HAP-1 (cell line): ENCODE measurements at regions of chr12 and their contacts with region 1.

Region 1: GRCh38 chr12:54958048-54958658 is 26.4 kb downstream of the TESPA1 start:
- DNase-seq: peak; percentile 59 to 66
- H3K4me3 ChIP-seq: no peak overlapping the region
- H3K4me1 ChIP-seq: no peaks in the 10 kb centered on the region
- H3K27me3 ChIP-seq: no peaks in the 10 kb centered on the region

Region 2: DNA sequence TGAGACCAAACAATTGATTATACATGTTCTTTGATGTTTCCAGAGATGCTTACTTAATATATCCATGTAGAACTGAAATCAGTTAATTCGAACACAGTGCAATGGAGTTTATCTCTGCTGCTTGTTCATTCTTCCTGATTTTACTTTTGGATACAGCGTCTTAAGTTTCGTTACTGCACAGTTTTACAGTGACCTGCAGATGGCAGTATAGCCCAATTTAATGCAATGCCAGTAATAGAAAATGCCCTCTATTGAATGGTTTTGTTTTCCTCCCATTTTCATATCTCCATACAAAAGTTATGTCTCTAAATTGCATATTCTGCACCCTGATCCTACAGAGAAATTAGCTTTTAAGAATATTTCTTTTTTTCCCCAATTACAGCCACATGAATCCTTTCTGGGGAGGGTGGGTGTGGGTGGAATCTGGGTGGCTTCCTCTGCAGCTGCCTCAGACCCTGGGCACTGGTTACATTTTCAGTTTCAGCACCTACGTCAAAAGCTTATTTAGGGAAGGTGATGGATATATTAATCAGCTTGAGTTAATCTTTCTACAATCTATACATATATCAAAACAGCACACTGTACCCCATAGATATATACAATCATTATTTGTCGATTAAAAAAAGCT is 208.8 kb before region 1 on chr12:
- in situ Hi-C with region 1: loop called (anchors 25 kb)
- DNase-seq: peak; percentile 20 to 40
- H3K4me3 ChIP-seq: no peak overlapping the region
- H3K4me1 ChIP-seq: no peaks in the 10 kb centered on the region
- H3K27me3 ChIP-seq: no peaks in the 10 kb centered on the region

Region 3: GRCh38 chr12:54840317-54840771 is 117.8 kb before region 1 on chr12:
- in situ Hi-C with region 1: loop called (anchors 10 kb)
- DNase-seq: no peak
- H3K4me3 ChIP-seq: no peak overlapping the region
- H3K4me1 ChIP-seq: no peaks in the 10 kb centered on the region
- H3K27me3 ChIP-seq: no peaks in the 10 kb centered on the region